Testis (tissue), 5 donors: ENCODE measurements at regions of chr5 and their contacts with region 1.

Region 1: GRCh38 chr5:170357955-170358444 is 31.2 kb downstream of the KCNMB1 start:
- DNase-seq: peak; percentile 92
- H3K4me3 ChIP-seq: no peak overlapping the region
- H3K27ac ChIP-seq: peak overlapping the region; percentile 55 to 81
- H3K4me1 ChIP-seq: peaks cover 78% of the 10 kb centered on the region
- H3K27me3 ChIP-seq: no peaks in the 10 kb centered on the region
- CTCF ChIP-seq: no peak
- POLR2A ChIP-seq: no peak

Region 2: DNA sequence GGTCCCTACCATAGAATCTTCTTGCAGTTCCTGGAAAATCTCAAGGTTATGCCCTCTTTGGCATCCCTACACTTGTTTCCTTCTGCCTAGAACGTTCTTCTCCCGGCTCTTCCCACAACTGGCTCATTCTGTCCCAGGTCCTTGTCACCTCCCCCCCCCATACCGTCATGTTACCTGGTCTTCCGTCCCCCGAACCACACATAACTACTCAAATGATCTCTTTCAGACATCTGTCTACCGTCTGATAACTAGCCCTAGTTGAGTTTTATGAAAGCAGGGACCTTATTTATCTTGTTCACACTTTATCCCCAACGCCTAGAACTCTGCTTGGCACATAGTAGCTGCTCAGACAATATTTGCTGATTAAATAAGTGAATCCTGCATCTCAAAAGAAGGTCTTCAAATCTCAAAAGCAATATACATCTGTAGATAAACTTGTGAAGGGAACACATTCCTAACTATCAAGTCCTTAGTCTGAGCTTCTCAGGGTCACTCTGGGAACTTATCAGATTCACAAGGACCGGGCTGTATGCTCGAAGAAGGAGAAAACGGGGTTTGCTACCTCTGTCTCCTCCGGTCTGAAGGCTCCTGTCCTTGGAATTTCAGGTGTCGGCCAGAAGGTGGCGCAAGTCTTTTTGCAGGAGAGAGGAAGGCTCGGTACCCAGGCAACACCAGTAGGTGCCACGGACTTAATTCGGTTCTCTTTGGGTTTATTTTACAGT is 90.4 kb before region 1 on chr5:
- intact Hi-C with region 1: loop called (anchors 10 kb)
- DNase-seq: peak; percentile 88
- H3K4me3 ChIP-seq: no peak overlapping the region
- H3K27ac ChIP-seq: peak overlapping the region; percentile 31 to 77
- H3K4me1 ChIP-seq: peaks cover 33% of the 10 kb centered on the region
- H3K27me3 ChIP-seq: no peaks in the 10 kb centered on the region
- CTCF ChIP-seq: peak; percentile 86 to 91 (median 87)
- POLR2A ChIP-seq: no peak

Region 3: DNA sequence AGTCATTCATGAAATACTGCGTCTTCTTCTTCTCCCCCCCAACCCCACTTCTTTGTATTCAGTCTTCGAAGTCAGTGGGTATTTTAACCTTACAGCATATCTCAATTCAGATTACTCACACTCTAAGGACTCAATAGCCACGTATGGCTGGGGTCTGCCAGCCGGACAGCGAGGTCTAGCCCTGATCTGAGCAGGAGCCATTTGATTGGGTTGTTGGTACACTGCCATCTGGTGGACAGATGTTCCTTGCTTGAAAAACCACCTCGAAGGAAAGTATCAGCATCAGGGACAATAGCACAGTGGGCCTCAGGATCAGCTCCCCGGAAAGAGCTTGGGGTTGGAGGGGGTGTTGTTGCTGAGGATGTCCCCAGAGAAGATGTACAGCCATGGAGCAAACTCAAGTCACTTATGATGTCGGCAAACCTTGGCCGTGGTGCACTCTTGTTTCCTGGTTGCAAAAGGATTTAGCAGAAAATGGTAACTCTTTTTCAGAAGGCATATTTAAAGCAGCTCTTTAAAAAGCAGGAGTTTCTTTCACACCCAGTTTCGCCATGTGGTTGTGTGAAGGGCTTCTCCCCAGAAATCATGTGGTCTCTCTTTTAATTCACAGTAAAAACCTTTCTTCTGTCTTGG is 62.9 kb after region 1 on chr5:
- intact Hi-C with region 1: no loop called
- DNase-seq: peak; percentile 79
- H3K4me3 ChIP-seq: no peak overlapping the region
- H3K27ac ChIP-seq: no peak overlapping the region
- H3K4me1 ChIP-seq: peaks cover 4% of the 10 kb centered on the region
- H3K27me3 ChIP-seq: no peaks in the 10 kb centered on the region
- CTCF ChIP-seq: peak; percentile 59 to 74 (median 65)
- POLR2A ChIP-seq: no peak